ENCODE measurements at regions of chr16 and their contacts with region 1.

Region 1: DNA sequence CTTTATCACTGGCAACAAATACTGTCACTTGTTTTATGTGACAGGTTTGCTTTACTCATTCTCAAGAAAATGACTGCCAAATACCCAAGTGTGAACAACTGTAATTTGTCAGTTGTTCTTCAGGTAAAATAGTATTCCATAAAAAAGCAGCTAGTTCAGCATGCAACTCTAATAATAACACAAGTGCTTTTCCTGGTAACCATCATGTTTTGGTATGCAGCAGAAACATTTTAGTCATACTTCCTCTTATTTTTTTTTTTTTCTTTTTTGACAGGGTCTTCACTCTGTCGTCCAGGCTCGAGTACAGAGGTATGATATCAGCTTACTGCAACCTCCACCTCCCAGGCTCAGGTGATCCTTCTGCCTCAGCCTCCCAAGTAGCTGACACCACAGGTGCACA is 4.6 kb downstream of the TERF2 start:
- DNase-seq: no peak
- ATAC-seq: no peak
- H3K4me3 ChIP-seq: no peak overlapping the region
- H3K27ac ChIP-seq: no peak overlapping the region
- H3K4me1 ChIP-seq: peaks cover 9% of the 10 kb centered on the region
- H3K27me3 ChIP-seq: no peaks in the 10 kb centered on the region
- CTCF ChIP-seq: no peak
- EP300 ChIP-seq: no peak
- POLR2A ChIP-seq: no peak
- RAD21 ChIP-seq: no peak

Region 2: GRCh38 chr16:68520649-68521086 is 860.6 kb before region 1 on chr16:
- CTCF ChIA-PET with region 1: no interaction called
- POLR2A ChIA-PET with region 1: no interaction called
- RAD21 ChIA-PET with region 1: no interaction called
- SMC1A ChIA-PET with region 1: no interaction called
- in situ Hi-C with region 1: no loop called
- intact Hi-C with region 1: no loop called
- DNase-seq: no peak
- ATAC-seq: peak; percentile 98
- H3K4me3 ChIP-seq: no peak overlapping the region
- H3K27ac ChIP-seq: no peak overlapping the region
- H3K4me1 ChIP-seq: no peaks in the 10 kb centered on the region; the same call in 1 of the 2 replicates
- H3K27me3 ChIP-seq: no peaks in the 10 kb centered on the region; a peak in 1 of 4 replicates
- CTCF ChIP-seq: peak; percentile 99 to 100 (median 100); a peak in 5 of 6 replicates
- EP300 ChIP-seq: peak in 1 of 2 experiments; percentile 25; a peak in 1 of 4 replicates
- POLR2A ChIP-seq: no peak
- RAD21 ChIP-seq: peak; percentile 55

Region 3: DNA sequence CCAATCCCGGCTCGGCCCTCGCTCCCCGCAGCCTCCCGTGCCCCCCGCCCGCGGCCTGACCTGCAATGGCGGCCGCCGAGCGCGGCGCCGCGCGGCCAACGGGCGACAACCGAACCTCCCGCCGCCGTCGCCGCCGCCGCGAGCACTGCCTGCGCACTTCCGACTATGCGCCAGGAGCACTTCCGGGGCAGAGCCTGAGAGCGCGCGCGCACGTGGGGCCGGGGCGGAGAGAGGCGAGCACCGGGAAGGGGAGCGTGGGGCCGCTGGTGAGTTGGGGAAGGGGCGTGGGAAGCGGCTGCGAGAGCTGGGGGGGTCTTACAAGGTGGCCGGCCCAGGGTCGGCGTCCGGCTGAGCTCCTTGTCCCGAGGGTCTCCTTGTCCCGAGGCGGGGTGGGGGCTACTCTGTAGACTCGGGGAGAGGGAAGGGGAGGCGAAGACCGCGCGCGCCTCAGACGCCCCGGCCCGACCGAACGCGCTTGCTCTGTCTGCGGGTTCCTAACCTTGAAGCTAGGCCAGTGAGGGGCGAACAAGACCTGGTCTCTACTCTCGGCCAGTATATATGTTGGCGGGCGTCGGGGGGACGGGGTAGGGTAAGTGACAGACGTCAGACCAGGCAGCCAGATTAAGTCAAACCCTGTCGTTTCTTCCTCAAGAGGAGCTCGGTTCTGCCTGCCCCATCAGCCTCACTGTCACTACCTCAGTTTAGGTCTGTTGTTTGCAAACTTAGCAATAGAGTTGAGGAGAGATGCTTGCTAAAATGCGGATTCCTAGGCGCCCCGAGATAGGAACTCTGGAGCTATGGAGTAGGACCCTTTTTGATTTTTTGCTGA is 248.6 kb before region 1 on chr16 and contains the starts of genes CHTF8 and UTP4:
- CTCF ChIA-PET with region 1: no interaction called
- POLR2A ChIA-PET with region 1: interaction called, 11 read pairs
- RAD21 ChIA-PET with region 1: no interaction called
- SMC1A ChIA-PET with region 1: no interaction called
- in situ Hi-C with region 1: no loop called
- intact Hi-C with region 1: no loop called
- DNase-seq: no peak
- ATAC-seq: peak; percentile 93
- H3K4me3 ChIP-seq: peak within 1 kb of the TSS; percentile 95
- H3K27ac ChIP-seq: peak within 1 kb of the TSS; percentile 96
- H3K4me1 ChIP-seq: peaks cover 2% of the 10 kb centered on the region; the same call in 1 of the 2 replicates
- H3K27me3 ChIP-seq: no peaks in the 10 kb centered on the region
- CTCF ChIP-seq: no peak
- EP300 ChIP-seq: no peak
- POLR2A ChIP-seq: peak; percentile 99
- RAD21 ChIP-seq: no peak
- polyA plus RNA-seq, gene CHTF8: 18.5 to 52.7 TPM
- polyA plus RNA-seq, gene UTP4: 52.5 to 85.8 TPM

Region 4: DNA sequence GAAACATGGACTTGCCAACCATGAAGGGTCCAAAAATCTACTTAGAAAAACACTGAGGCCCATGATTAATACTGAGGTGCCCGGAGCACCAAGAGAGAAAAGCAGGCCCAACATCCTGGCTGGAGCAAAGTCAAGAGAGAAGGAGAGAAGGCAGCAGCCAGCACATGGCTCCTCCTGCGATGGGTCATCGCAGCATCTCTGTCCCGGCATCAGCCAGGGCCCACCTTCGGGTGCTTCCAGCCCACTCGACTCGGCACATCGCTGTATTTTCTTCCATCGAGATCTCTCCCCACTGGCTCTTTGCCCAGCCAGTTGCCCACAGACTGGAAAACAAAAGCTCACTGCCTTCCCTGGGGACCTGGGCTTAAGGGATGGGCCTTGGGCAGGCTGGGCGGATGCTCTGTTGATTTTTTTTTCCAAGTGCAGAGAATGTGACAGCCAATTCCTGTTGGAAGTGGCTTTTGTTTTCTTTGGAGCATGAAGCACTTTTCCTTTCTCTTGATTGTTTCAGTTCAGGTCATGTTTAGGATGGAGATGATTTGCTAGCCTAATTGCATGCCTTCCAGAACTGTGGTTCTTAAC is 101.3 kb after region 1 on chr16:
- CTCF ChIA-PET with region 1: no interaction called
- POLR2A ChIA-PET with region 1: no interaction called
- RAD21 ChIA-PET with region 1: no interaction called
- SMC1A ChIA-PET with region 1: no interaction called
- in situ Hi-C with region 1: no loop called
- intact Hi-C with region 1: no loop called
- DNase-seq: no peak
- ATAC-seq: no peak
- H3K4me3 ChIP-seq: no peak overlapping the region
- H3K27ac ChIP-seq: no peak overlapping the region
- H3K4me1 ChIP-seq: no peaks in the 10 kb centered on the region
- H3K27me3 ChIP-seq: no peaks in the 10 kb centered on the region
- CTCF ChIP-seq: no peak
- EP300 ChIP-seq: no peak
- POLR2A ChIP-seq: no peak
- RAD21 ChIP-seq: no peak